Tibial artery (tissue), 4 donors: ENCODE measurements at regions of chr10 and their contacts with region 1.

Region 1: GRCh38 chr10:101214446-101215396 is 14.5 kb downstream of the LBX1 start:
- DNase-seq: no peak
- H3K4me3 ChIP-seq: peak overlapping the region in 1 of 2 donors; percentile 10
- H3K27ac ChIP-seq: no peak overlapping the region
- H3K4me1 ChIP-seq: peaks cover 0 to 48% (median 42%) of the 10 kb centered on the region in 4 donors
- H3K27me3 ChIP-seq: peaks cover 8 to 99% of the 10 kb centered on the region in 2 donors
- CTCF ChIP-seq: peak; percentile 63 to 84

Region 2: DNA sequence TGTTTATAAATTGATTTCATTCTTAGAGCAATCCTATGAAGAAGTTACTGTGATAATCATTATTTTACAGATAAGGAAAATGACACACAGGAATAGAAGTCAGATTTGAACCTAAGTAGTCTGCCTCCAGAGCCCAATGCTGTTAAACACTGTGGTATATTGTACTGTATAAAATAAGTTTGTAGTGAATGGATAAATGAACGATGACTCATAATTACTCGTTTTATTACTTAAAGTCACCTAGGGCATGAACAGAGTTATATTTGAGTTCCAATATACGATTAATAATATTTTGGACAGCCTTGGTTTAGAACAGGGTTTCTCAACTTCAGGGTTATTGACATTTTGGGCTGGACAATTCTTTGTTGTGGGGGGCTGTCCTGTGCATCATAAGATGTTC is 131.5 kb after region 1 on chr10:
- intact Hi-C with region 1: no loop called
- DNase-seq: no peak
- H3K4me3 ChIP-seq: no peak overlapping the region
- H3K27ac ChIP-seq: no peak overlapping the region
- H3K4me1 ChIP-seq: no peaks in the 10 kb centered on the region
- H3K27me3 ChIP-seq: peaks cover 0 to 19% of the 10 kb centered on the region in 2 donors
- CTCF ChIP-seq: no peak

Region 3: GRCh38 chr10:101467286-101467770 is 252.6 kb after region 1 on chr10:
- intact Hi-C with region 1: loop called (anchors 10 kb)
- DNase-seq: peak in 1 of 2 donors; percentile 33
- H3K4me3 ChIP-seq: no peak overlapping the region
- H3K27ac ChIP-seq: no peak overlapping the region
- H3K4me1 ChIP-seq: peaks cover 0 to 13% (median 6%) of the 10 kb centered on the region in 4 donors
- H3K27me3 ChIP-seq: no peaks in the 10 kb centered on the region
- CTCF ChIP-seq: peak; percentile 67 to 78

Region 4: GRCh38 chr10:101569838-101570766 is 355.4 kb after region 1 on chr10:
- intact Hi-C with region 1: loop called (anchors 2 kb)
- DNase-seq: peak; percentile 76 to 81
- H3K4me3 ChIP-seq: peak overlapping the region; percentile 29 to 51
- H3K27ac ChIP-seq: no peak overlapping the region
- H3K4me1 ChIP-seq: peaks cover 0 to 26% (median 24%) of the 10 kb centered on the region in 4 donors
- H3K27me3 ChIP-seq: peaks cover 11 to 60% of the 10 kb centered on the region in 2 donors
- CTCF ChIP-seq: peak; percentile 79 to 96

Region 5: GRCh38 chr10:102546606-102547320 is 1332.0 kb after region 1 on chr10:
- intact Hi-C with region 1: no loop called
- DNase-seq: peak in 1 of 2 donors; percentile 20
- H3K4me3 ChIP-seq: no peak overlapping the region
- H3K27ac ChIP-seq: no peak overlapping the region
- H3K4me1 ChIP-seq: peaks cover 0 to 33% (median 21%) of the 10 kb centered on the region in 4 donors
- H3K27me3 ChIP-seq: no peaks in the 10 kb centered on the region
- CTCF ChIP-seq: no peak